Astrocyte of the cerebellum (primary cell): ENCODE measurements at regions of chr6 and their contacts with region 1.

Region 1: DNA sequence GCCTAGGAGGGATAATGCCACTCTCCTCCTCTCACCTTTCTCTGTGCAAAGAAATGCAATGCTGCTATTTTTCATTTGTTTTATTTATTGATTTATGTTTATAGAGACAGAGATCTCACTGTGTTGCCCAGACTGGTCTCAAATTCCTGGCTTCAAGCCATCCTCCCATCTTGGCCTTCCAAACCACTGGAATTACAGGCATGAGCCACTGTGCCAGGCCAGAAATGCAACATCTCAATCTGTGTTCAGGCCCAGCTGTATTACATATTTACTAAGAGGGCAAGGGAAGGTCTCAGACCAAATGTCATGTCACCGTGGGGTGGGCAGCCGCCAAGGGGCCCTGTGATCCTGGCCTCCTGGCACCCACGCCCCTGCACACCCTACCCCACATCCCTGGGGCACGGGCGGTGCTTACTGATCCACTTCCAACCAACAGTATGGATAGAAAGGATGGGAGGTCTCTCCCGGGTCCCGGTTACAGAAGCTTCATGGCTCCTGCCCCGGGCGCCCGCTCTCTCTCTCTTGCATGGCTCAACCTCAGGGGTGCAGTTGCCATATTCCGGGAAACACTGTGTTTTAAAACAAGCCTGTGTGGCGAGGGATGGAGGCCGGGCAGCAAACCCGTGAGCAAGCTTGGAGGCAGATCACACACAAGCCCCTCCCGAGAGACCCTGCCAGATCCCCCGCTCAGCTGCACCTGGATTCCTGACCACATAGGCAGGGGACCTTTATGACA is 111.8 kb downstream of the AGPAT4 start:
- DNase-seq: peak; percentile 69
- H3K4me3 ChIP-seq: no peak overlapping the region
- CTCF ChIP-seq: no peak

Region 2: GRCh38 chr6:160992061-160992979 is 169.7 kb before region 1 on chr6:
- in situ Hi-C with region 1: no loop called
- DNase-seq: no peak
- H3K4me3 ChIP-seq: peak overlapping the region; percentile 76
- CTCF ChIP-seq: peak; percentile 84

Region 3: DNA sequence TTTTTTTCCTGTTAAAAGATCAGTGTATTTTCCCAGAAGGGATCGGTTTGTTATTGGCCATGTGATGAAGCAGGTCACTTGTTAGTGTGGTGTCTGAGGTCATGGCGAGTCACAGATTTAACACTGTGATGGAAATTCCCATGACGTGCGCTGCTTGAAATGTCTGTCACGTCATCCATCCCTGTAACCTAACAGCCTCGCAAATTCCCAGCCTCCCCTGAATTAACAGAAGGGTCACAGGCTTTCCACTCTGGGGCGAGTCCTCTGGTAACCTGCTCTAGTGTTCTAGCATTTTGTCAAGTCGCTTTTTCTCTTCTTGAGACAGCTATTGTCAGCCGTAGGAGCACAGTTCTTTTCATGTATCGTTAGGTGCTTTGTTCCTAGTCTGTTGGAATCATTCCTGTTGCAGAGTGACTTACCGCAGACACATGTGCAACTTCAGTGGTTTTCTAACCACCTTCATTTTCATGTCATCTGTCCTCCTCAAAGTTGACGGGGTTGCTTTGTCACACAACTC is 33.3 kb before region 1 on chr6:
- in situ Hi-C with region 1: loop called (anchors 5 kb)
- DNase-seq: peak; percentile 33
- H3K4me3 ChIP-seq: no peak overlapping the region
- CTCF ChIP-seq: no peak